ENCODE measurements at regions of chr18 and their contacts with region 1.

Region 1: GRCh38 chr18:5237723-5238370 is 40.8 kb upstream of the AKAIN1 start:
- DNase-seq: peak; percentile 78 to 94 (median 85)
- ATAC-seq: peak; percentile 87
- H3K4me3 ChIP-seq: peak overlapping the region; percentile 82 to 85
- H3K4me3 Mint-ChIP-seq: peak overlapping the region; percentile 95
- H3K27ac ChIP-seq: peak overlapping the region; percentile 94 to 98
- H3K27ac Mint-ChIP-seq: peak overlapping the region; percentile 98
- H3K4me1 ChIP-seq: peaks cover 28% of the 10 kb centered on the region
- H3K4me1 Mint-ChIP-seq: peaks cover 53% of the 10 kb centered on the region
- H3K27me3 ChIP-seq: no peaks in the 10 kb centered on the region
- H3K27me3 Mint-ChIP-seq: no peaks in the 10 kb centered on the region
- CTCF ChIP-seq: no peak

Region 2: GRCh38 chr18:5159080-5159479 is 78.8 kb before region 1 on chr18:
- CTCF ChIA-PET with region 1: interaction called, 6 read pairs
- POLR2A ChIA-PET with region 1: interaction called, 21 read pairs
- intact Hi-C with region 1: loop called (anchors 1 to 2 kb)
- DNase-seq: peak in 4 of 9 experiments; percentile 24 to 63 (median 42)
- ATAC-seq: peak; percentile 85
- H3K4me3 ChIP-seq: no peak overlapping the region
- H3K4me3 Mint-ChIP-seq: peak overlapping the region; percentile 63
- H3K27ac ChIP-seq: peak overlapping the region; percentile 17 to 48
- H3K27ac Mint-ChIP-seq: peak overlapping the region; percentile 94
- H3K4me1 ChIP-seq: peaks cover 37% of the 10 kb centered on the region
- H3K4me1 Mint-ChIP-seq: peaks cover 44% of the 10 kb centered on the region
- H3K27me3 ChIP-seq: no peaks in the 10 kb centered on the region
- H3K27me3 Mint-ChIP-seq: no peaks in the 10 kb centered on the region
- CTCF ChIP-seq: no peak

Region 3: GRCh38 chr18:5167831-5168230 is 70.0 kb before region 1 on chr18:
- CTCF ChIA-PET with region 1: no interaction called
- POLR2A ChIA-PET with region 1: interaction called, 8 read pairs
- intact Hi-C with region 1: loop called in 1 of 2 experiments (anchors 2 kb)
- DNase-seq: peak in 2 of 9 experiments; percentile 7 to 25
- ATAC-seq: peak; percentile 40
- H3K4me3 ChIP-seq: no peak overlapping the region
- H3K4me3 Mint-ChIP-seq: peak overlapping the region; percentile 36
- H3K27ac ChIP-seq: no peak overlapping the region
- H3K27ac Mint-ChIP-seq: peak overlapping the region; percentile 91
- H3K4me1 ChIP-seq: peaks cover 30% of the 10 kb centered on the region
- H3K4me1 Mint-ChIP-seq: peaks cover 37% of the 10 kb centered on the region
- H3K27me3 ChIP-seq: no peaks in the 10 kb centered on the region
- H3K27me3 Mint-ChIP-seq: no peaks in the 10 kb centered on the region
- CTCF ChIP-seq: no peak

Region 4: DNA sequence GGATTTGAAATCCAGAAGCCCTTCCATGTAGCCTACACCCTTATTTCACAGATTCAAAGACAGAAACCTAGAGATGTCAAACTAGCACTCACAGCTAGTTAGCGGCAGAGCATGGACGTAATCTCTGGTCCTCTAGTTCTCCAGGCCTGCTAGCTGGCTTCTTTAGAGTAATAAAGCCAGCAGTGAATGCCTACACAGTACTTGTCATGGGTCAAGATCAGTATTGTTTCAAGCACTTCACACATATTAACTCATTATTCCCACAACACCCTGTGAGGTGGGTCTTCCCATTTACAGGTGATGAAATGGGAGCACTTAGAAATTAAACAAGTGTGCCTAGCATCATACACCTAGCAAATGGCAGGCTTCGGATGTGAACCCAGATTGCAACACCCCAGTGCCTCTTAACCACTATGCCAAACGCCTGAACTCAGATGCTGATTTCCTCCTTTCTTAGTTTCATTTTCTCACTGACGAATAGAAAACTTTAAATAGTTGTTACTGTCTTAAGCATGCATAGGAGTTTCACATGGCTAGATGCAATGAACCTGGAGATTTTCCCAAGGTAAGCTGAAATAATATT is 72.1 kb after region 1 on chr18:
- CTCF ChIA-PET with region 1: interaction called, 5 read pairs
- POLR2A ChIA-PET with region 1: interaction called, 5 read pairs
- intact Hi-C with region 1: loop called in 1 of 2 experiments (anchors 5 kb)
- DNase-seq: peak in 8 of 9 experiments; percentile 17 to 77 (median 38)
- ATAC-seq: peak; percentile 93
- H3K4me3 ChIP-seq: peak overlapping the region; percentile 37 to 47
- H3K4me3 Mint-ChIP-seq: peak overlapping the region; percentile 88
- H3K27ac ChIP-seq: peak overlapping the region; percentile 28 to 78
- H3K27ac Mint-ChIP-seq: peak overlapping the region; percentile 92
- H3K4me1 ChIP-seq: peaks cover 18% of the 10 kb centered on the region
- H3K4me1 Mint-ChIP-seq: peaks cover 26% of the 10 kb centered on the region
- H3K27me3 ChIP-seq: no peaks in the 10 kb centered on the region
- H3K27me3 Mint-ChIP-seq: no peaks in the 10 kb centered on the region
- CTCF ChIP-seq: no peak